Mucosa of descending colon (tissue), 3 donors: ENCODE measurements at regions of chr19 and their contacts with region 1.

Region 1: GRCh38 chr19:17195106-17195505 is 20.1 kb upstream of the USE1 start:
- DNase-seq: no peak
- ATAC-seq: no peak
- H3K4me3 ChIP-seq: no peak overlapping the region
- H3K4me1 ChIP-seq: no peaks in the 10 kb centered on the region
- CTCF ChIP-seq: no peak

Region 2: GRCh38 chr19:16920758-16921210 is 274.3 kb before region 1 on chr19:
- intact Hi-C with region 1: no loop called
- DNase-seq: no peak
- ATAC-seq: no peak
- H3K4me3 ChIP-seq: no peak overlapping the region
- H3K4me1 ChIP-seq: no peaks in the 10 kb centered on the region
- CTCF ChIP-seq: no peak

Region 3: DNA sequence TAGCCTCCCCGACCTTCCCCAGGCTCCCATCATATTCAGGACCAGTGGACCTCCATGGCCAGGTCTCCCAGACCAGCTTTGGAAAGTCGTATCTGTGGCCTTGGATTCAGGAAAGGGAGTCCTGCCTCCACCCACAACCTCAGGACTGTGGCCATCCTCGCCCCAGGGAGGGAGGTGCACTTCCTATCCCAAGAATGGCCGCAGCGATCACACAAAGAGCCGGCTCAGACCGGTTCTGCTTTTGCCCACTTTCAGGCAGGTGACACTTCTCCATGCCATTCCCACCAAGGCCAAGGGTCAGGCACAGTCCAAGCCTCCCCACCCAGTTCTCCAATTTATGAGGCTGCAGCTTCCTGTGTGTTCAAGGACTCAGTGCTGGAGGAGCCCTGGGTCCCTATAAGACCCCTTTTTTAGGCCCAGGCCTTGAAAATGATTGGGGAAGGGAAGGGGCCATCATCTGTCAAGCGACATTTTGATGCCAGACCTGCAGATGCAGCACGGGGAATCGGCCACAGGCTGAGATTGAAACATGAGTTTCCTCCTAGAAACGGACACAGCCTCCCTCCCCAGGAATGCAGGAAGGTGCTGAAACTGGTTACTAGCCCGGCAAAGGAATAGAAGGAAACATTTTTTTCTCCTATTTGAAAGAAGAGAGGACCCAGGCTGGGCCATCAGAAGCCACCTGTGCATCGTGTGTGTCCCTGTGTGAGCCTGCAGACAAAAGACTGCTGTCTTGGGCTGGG is 45.5 kb before region 1 on chr19:
- intact Hi-C with region 1: loop called in 1 of 2 experiments (anchors 10 kb)
- DNase-seq: peak in 1 of 3 donors; percentile 31
- ATAC-seq: peak; percentile 53
- H3K4me3 ChIP-seq: no peak overlapping the region
- H3K4me1 ChIP-seq: no peaks in the 10 kb centered on the region
- CTCF ChIP-seq: no peak